Right ventricle myocardium superior (tissue), 1 donor: ENCODE measurements at regions of chr5 and their contacts with region 1.

Region 1: GRCh38 chr5:136080483-136081216 is 51.9 kb downstream of the TGFBI start:
- DNase-seq: peak; percentile 95
- ATAC-seq: peak; percentile 94

Region 2: DNA sequence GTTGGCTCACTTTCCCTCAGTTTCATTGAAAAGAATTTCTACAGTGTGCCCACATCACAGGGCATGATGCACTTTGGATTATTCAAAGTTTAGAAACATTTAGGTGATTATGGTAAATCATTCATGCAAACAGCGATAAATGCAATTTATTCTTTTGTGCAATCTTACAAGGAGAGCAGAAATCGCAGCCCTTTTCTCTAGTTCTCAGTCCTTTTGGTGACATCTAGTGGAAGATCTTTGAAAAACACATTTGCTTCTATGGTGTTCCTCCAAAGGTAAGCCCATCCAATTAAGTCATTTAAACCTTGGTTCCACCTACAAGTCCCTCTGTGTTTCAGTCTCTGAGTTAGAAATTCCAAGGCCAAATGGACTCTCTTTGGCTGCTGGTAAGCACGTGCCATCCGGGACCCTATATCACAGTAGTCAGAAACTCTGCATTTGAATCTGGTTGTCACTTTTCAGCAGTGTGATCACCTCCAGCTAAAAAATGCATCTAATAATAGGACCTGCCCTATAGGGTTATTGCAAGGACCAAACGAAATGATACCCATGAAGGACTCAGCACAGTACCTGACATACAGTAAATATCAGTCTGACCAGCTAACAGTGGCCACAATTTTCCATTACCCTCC is 748.0 kb before region 1 on chr5:
- intact Hi-C with region 1: no loop called
- DNase-seq: no peak
- ATAC-seq: peak; percentile 28

Region 3: DNA sequence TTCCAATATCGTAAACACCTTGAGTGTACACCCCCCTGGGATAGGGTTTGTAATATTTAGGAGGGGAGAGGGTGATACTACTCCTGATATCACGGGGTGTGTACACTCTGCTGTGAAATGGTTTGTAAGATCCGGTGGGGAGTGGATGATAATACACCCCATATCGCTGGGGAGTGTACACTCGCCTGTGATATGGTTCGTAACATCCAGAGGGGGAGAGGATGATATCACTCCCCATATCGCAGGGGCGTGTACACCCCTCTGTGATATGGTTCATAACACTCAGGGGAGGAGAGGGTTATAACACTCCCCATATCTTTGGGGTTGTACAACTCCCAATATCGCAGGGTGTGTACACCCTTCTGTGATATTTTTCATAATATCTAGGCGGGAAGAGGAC is 280.0 kb before region 1 on chr5:
- intact Hi-C with region 1: no loop called
- DNase-seq: no peak
- ATAC-seq: no peak

Region 4: GRCh38 chr5:135857630-135858304 is 222.9 kb before region 1 on chr5:
- intact Hi-C with region 1: no loop called
- DNase-seq: no peak
- ATAC-seq: no peak

Region 5: GRCh38 chr5:135944967-135945560 is 135.6 kb before region 1 on chr5:
- intact Hi-C with region 1: loop called (anchors 5 kb)
- DNase-seq: no peak
- ATAC-seq: peak; percentile 74

Region 6: GRCh38 chr5:136646915-136647314 is 566.3 kb after region 1 on chr5:
- intact Hi-C with region 1: no loop called
- DNase-seq: no peak
- ATAC-seq: no peak